ENCODE measurements at regions of chr6 and their contacts with region 1.

Region 1: DNA sequence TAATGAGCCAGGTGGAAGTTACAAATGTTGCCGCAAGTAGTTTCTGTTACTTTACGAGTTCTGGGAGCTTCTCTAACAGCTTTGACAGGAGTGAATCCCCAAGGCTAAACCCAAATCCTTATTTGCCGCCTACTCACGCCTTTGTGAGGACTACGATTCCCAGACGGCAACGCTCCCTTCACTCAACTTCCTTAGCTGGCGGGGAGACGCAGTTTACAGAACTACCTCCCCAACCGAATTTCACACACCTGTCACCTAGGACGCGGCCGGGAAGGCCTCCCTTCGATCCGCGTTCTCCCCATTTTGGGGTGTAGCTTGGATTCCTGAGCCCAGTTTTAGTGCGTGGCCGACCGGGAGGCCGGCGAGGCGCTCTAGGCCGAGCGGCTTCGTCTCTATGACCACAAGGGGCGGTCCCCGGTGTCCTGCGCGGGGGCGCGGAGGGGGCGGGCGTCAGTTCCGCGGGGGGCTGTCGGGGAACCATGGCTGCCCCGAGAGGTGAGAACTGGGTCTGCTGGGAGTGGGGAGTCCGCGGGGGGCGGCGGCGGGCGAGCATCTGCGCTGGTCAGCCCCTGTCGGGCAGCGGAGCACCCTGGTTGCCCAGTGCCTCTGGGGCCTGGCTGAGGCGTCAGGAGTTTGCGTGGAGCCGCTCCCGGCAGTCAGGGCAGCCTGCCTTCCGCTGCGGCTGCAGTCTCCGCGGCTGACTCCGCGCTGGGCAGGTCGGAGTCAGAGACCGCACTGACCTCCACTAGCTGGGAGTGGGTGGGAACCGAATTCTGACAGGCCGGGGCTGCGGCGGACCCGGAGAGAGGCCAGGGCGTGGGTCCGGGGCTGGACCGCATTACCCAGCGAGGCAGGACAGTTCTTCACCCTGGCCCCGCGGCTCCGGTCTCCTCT is at the start of gene SLC35A1:
- DNase-seq: peak; percentile 93
- ATAC-seq: peak; percentile 97
- H3K4me3 ChIP-seq: peak within 1 kb of the TSS; percentile 72 to 95 (median 85)
- H3K4me3 Mint-ChIP-seq: peak within 1 kb of the TSS; percentile 99
- H3K27ac ChIP-seq: peak within 1 kb of the TSS; percentile 85 to 98
- H3K27ac Mint-ChIP-seq: peak within 1 kb of the TSS; percentile 100
- H3K4me1 ChIP-seq: peaks cover 7 to 11% of the 10 kb centered on the region in 2 donors
- H3K4me1 Mint-ChIP-seq: peaks cover 13% of the 10 kb centered on the region
- H3K27me3 ChIP-seq: peaks cover 0 to 7% (median 0%) of the 10 kb centered on the region in 4 experiments
- H3K27me3 Mint-ChIP-seq: peaks cover 9% of the 10 kb centered on the region
- CTCF ChIP-seq: peak; percentile 27
- total RNA-seq, gene SLC35A1: 15.1 and 15.6 TPM in 2 replicates

Region 2: GRCh38 chr6:87322304-87323212 is 150.2 kb before region 1 on chr6 and contains the start of gene SMIM8:
- CTCF ChIA-PET with region 1: interaction called, 9 read pairs
- POLR2A ChIA-PET with region 1: no interaction called
- intact Hi-C with region 1: loop called (anchors 1 kb)
- DNase-seq: peak; percentile 87
- ATAC-seq: peak; percentile 100
- H3K4me3 ChIP-seq: peak within 1 kb of the TSS; percentile 78 to 87 (median 81)
- H3K4me3 Mint-ChIP-seq: peak within 1 kb of the TSS; percentile 95
- H3K27ac ChIP-seq: peak within 1 kb of the TSS; percentile 42 to 74
- H3K27ac Mint-ChIP-seq: peak within 1 kb of the TSS; percentile 88
- H3K4me1 ChIP-seq: peaks cover 4 to 13% of the 10 kb centered on the region in 2 donors
- H3K4me1 Mint-ChIP-seq: peaks cover 25% of the 10 kb centered on the region
- H3K27me3 ChIP-seq: no peaks in the 10 kb centered on the region
- H3K27me3 Mint-ChIP-seq: no peaks in the 10 kb centered on the region
- CTCF ChIP-seq: peak; percentile 99
- total RNA-seq, gene SMIM8: 18.7 and 19.1 TPM in 2 replicates

Region 3: GRCh38 chr6:87589693-87590549 is 117.1 kb after region 1 on chr6 and contains the starts of genes ORC3 and RARS2:
- CTCF ChIA-PET with region 1: interaction called, 4 read pairs
- POLR2A ChIA-PET with region 1: interaction called, 3 read pairs
- intact Hi-C with region 1: loop called (anchors 1 kb)
- DNase-seq: peak; percentile 94
- ATAC-seq: peak; percentile 99
- H3K4me3 ChIP-seq: peak within 1 kb of the TSS; percentile 74 to 100 (median 96)
- H3K4me3 Mint-ChIP-seq: peak within 1 kb of the TSS; percentile 96
- H3K27ac ChIP-seq: peak within 1 kb of the TSS; percentile 78 to 91
- H3K27ac Mint-ChIP-seq: peak within 1 kb of the TSS; percentile 88
- H3K4me1 ChIP-seq: peaks cover 27 to 28% of the 10 kb centered on the region in 2 donors
- H3K4me1 Mint-ChIP-seq: peaks cover 56% of the 10 kb centered on the region
- H3K27me3 ChIP-seq: no peaks in the 10 kb centered on the region
- H3K27me3 Mint-ChIP-seq: no peaks in the 10 kb centered on the region
- CTCF ChIP-seq: no peak
- total RNA-seq, gene ORC3: 27.8 and 31.2 TPM in 2 replicates
- total RNA-seq, gene RARS2: 37.9 and 38.7 TPM in 2 replicates

Region 4: DNA sequence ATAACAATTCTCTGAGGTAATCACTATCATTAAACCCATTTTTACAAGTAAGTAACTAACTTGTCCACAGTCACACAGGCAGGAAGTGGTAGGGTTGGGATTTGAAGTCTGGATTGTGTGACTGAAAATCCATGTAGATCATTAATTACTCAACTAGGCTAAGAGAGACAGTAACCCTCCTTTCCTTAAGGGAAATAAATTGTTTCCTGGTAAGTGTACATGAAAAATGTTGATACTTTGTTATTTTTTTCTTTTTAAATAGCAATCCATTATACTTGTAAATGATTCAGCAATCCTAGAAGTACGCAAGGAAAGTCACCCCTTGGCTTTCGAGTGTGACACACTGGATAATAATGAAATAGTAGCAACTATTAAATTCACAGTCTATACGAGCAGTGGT is 586.4 kb after region 1 on chr6:
- CTCF ChIA-PET with region 1: no interaction called
- POLR2A ChIA-PET with region 1: no interaction called
- intact Hi-C with region 1: no loop called
- DNase-seq: no peak
- ATAC-seq: no peak
- H3K4me3 ChIP-seq: no peak overlapping the region
- H3K4me3 Mint-ChIP-seq: no peak overlapping the region
- H3K27ac ChIP-seq: no peak overlapping the region
- H3K27ac Mint-ChIP-seq: no peak overlapping the region
- H3K4me1 ChIP-seq: no peaks in the 10 kb centered on the region
- H3K4me1 Mint-ChIP-seq: no peaks in the 10 kb centered on the region
- H3K27me3 ChIP-seq: no peaks in the 10 kb centered on the region
- H3K27me3 Mint-ChIP-seq: peaks cover 12% of the 10 kb centered on the region
- CTCF ChIP-seq: no peak

Measured in B cell (primary cell).